PC-3 (cell line): ENCODE measurements at regions of chr12 and their contacts with region 1.

Region 1: GRCh38 chr12:111274777-111275176 is 94.1 kb downstream of the PHETA1 start:
- DNase-seq: peak; percentile 40
- ATAC-seq: peak; percentile 39
- H3K4me3 ChIP-seq: no peak overlapping the region
- H3K27ac ChIP-seq: no peak overlapping the region
- H3K4me1 ChIP-seq: no peaks in the 10 kb centered on the region; the same call in 1 of the 2 replicates
- H3K27me3 ChIP-seq: 0 out of 2 replicates have a peak, but pooled peaks cover 5% of the 10 kb centered on the region
- CTCF ChIP-seq: peak; percentile 84

Region 2: DNA sequence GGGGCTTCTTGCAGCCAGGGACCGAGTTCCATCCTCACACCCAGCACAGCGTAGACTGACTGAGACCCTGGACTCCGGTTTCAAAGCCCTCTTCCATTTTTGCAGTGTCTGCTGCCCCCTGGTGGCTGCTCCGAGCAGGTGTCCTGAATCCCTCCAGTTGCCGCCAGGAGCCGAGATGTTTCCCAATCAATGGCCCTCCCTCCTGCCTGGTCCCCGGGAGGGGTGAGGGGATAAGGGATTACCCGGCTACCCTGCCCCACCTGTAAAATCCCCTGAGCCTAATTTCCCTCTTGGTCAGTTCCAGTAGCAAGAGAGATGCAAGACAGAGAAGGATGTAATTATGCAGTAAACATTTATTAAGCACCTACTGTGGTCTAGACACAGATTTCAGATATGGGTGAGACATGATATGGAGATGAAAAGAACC is 39.1 kb after region 1 on chr12:
- CTCF ChIA-PET with region 1: no interaction called
- POLR2A ChIA-PET with region 1: no interaction called
- intact Hi-C with region 1: loop called (anchors 5 kb)
- DNase-seq: peak; percentile 87
- ATAC-seq: peak; percentile 70
- H3K4me3 ChIP-seq: 0 out of 2 replicates have a peak overlapping the region, but pooled peaks have one; percentile 18
- H3K27ac ChIP-seq: no peak overlapping the region
- H3K4me1 ChIP-seq: peaks cover 28% of the 10 kb centered on the region
- H3K27me3 ChIP-seq: no peaks in the 10 kb centered on the region
- CTCF ChIP-seq: peak; percentile 98

Region 3: DNA sequence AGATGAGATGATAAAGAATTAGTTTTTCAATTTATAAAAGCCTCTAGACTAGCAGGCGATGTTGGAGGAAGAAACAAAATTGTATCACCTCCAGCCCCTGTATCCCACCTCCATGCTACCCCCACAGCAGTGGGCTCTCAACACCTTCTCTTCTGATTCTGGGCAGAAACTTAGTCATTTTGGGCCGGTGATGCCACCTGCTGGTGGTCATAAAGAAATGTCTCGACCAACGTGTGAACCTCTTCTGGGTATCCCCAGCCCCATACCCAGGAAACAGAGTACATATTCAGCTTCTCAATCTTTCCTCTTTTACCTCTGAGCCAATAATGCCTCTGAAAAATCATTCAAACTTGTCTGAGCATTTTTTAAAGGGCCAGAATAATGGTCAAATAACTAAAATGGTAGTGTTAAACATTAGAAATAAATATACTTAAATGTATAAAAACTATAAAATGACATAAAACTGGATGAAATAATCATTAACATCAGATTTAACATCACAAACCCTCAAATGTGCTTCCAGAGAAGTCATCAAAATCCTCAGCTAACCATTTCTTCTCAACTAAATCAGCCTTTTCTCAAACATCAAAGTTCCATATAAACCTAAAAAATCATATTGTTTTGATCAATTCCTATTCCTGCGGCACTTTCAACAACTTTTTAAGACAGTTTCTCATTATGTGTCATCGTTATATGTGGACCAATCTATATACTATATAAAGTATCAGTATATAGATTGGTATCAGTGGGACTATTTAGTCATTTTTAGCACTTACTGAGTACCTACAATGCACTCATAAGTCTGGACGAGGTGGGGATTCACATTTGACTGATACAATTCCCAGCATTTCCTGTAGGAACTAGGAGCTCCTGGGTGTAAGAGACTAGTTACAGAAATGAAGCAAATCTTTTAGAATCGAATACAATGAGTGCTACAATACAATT is 254.9 kb after region 1 on chr12:
- CTCF ChIA-PET with region 1: no interaction called
- POLR2A ChIA-PET with region 1: no interaction called
- intact Hi-C with region 1: no loop called
- DNase-seq: peak; percentile 71
- ATAC-seq: peak; percentile 67
- H3K4me3 ChIP-seq: no peak overlapping the region
- H3K27ac ChIP-seq: no peak overlapping the region
- H3K4me1 ChIP-seq: no peaks in the 10 kb centered on the region
- H3K27me3 ChIP-seq: no peaks in the 10 kb centered on the region
- CTCF ChIP-seq: peak; percentile 92